ENCODE measurements at regions of chr11 and their contacts with region 1.

Region 1: GRCh38 chr11:57761301-57762234 is at the start of gene CTNND1:
- DNase-seq: peak; percentile 83
- ATAC-seq: peak; percentile 99
- H3K4me3 ChIP-seq: peak within 1 kb of the TSS; percentile 63
- H3K27ac ChIP-seq: peak within 1 kb of the TSS; percentile 87
- H3K4me1 ChIP-seq: peaks cover 32% of the 10 kb centered on the region
- H3K27me3 ChIP-seq: no peaks in the 10 kb centered on the region
- CTCF ChIP-seq: no peak
- total RNA-seq, gene CTNND1: 226 TPM

Region 2: DNA sequence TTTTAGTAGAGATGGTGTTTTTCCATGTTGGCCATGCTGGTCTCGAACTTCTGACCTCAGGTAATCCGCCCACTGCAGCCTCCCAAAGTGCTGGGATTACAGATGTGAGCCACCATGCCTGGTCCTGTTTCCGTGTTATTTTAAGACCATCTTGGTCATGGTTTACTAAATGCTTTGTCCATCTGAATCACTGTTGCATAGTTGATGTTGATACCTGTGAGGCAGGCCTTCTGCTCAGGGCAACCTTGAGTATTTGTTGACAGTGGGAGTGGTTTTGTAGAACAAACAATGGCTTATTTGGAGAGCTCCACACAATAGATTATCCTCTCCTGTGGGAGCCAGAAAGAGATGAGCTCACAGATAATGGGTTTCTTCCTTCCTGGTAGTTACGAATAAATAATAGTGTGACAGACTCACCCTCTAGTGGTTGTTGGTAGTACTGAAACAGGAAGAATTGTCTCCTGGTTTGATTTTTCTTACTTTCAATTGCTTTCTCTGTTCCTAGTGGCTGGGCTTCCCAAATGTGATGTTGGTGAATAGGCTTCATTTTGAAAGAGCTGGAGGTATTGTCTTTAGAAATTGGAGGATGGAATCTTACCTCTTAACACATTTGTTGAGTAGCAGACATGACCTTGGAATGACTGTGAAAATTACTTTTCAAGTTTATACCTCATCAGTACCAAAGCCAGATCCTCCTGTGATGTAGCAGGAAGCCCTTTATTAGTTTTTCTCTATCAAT is 39.0 kb after region 1 on chr11:
- intact Hi-C with region 1: loop called (anchors 5 kb)
- DNase-seq: no peak
- ATAC-seq: peak; percentile 82 to 84
- H3K4me3 ChIP-seq: peak overlapping the region; percentile 2
- H3K27ac ChIP-seq: peak overlapping the region; percentile 69
- H3K4me1 ChIP-seq: peaks cover 47% of the 10 kb centered on the region
- H3K27me3 ChIP-seq: no peaks in the 10 kb centered on the region
- CTCF ChIP-seq: peak; percentile 86

Measured in lower lobe of right lung (tissue), 2 donors.